Activated naive CD4-positive, alpha-beta T cell treated with anti-CD3 and anti-CD28 coated beads for 36 hours (primary cell): ENCODE measurements at regions of chr17 and their contacts with region 1.

Region 1: DNA sequence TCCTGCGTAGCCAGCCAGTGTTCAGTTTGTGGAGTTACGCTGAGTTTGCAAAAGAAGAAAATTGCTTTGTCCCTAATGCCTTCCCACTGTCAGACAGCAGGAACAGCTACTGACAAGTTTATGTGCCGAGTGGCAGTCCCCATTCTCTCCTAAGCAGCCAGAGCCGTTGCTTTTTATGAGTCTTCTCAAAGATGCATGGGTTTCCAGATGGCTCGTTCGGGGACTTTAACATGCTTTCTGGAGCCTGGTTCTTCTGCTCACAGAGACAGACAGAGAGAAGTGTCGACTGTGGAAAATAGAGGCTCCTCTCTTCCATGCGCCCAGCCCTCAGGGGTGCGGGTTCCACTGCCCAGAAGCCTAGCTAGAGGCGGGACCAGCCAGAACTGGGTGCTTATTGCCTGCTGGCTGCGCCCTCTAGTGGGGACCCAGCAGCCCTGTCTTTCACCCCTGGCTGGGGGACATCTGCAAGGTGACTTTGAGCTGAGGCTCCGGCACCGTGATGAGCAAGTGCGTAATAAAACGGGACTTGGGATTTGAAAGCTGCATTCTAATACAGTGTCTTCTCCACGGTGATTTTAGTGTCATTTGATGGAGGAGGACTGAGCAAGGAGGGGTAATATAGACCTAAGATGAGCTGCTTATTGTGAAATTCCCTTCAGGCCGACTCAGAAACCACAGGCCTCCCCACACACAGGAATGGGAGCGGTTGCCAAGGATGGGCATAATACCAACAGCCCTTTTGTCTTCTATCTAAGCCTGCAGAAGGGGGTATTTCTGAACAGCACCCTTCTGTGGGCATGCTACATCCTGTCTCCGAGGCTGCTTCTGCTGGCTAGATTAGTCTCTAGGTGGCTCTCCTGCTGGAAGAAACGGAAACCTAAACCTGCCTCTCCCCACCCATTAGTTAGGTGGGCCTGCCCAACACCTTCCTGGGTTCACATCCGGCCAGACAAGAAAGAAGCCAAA is 73.1 kb downstream of the CCDC182 start:
- DNase-seq: peak; percentile 83
- H3K4me3 Mint-ChIP-seq: no peak overlapping the region
- H3K27ac Mint-ChIP-seq: peak overlapping the region; percentile 83
- H3K4me1 Mint-ChIP-seq: peaks cover 34% of the 10 kb centered on the region
- H3K27me3 Mint-ChIP-seq: no peaks in the 10 kb centered on the region

Region 2: DNA sequence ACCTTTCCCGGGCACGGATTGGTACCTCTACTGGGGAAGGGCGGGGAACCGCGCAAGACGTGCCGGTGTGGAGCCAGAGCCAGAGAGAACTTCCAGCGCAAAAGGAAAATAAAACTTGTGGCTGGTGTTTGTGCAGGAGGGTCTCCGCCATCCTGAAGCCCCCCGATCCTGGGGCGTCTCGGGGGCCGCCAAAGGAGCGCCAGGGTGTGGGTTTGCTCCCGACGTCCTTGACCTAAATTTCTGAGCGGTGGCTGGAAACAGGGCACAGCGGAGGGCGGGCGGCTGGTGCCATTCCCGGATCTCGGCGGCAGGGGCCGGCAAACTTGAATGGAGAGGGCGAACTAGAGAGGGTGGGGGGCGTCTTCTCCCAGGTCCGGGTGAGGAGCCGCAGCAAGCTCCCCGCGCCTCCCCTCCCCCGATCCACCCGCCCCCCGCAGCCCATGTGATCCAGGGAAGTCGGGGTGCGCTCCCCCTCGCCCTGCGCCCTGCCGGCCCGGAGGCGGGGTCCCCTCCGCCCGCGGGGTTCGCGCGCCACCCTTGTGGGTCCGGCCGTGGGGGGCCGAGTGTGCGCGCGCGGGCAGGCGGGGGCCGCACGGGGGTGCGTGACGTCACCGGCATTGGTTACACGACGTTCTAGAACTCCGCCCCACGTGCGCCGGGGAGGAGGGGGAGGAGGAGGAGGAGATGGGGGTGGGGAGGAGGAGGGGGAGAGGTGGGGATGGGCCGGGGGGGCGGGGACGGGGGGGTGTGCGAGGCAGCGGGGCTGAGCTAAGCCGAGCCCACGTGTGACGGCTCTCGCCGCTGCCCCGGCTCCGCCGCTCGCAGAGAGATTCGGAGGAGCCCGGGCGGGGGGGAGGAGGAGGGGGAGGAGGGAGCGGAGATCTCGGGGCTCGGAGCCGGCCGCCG is 415.9 kb before region 1 on chr17 and contains the start of gene MSI2:
- CTCF ChIA-PET with region 1: interaction called, 6 read pairs
- intact Hi-C with region 1: loop called (anchors 5 kb)
- DNase-seq: peak; percentile 88
- H3K4me3 Mint-ChIP-seq: peak within 1 kb of the TSS; percentile 90
- H3K27ac Mint-ChIP-seq: peak within 1 kb of the TSS; percentile 86
- H3K4me1 Mint-ChIP-seq: peaks cover 38% of the 10 kb centered on the region
- H3K27me3 Mint-ChIP-seq: no peaks in the 10 kb centered on the region
- total RNA-seq, gene MSI2: 38.8 to 39.0 TPM

Region 3: DNA sequence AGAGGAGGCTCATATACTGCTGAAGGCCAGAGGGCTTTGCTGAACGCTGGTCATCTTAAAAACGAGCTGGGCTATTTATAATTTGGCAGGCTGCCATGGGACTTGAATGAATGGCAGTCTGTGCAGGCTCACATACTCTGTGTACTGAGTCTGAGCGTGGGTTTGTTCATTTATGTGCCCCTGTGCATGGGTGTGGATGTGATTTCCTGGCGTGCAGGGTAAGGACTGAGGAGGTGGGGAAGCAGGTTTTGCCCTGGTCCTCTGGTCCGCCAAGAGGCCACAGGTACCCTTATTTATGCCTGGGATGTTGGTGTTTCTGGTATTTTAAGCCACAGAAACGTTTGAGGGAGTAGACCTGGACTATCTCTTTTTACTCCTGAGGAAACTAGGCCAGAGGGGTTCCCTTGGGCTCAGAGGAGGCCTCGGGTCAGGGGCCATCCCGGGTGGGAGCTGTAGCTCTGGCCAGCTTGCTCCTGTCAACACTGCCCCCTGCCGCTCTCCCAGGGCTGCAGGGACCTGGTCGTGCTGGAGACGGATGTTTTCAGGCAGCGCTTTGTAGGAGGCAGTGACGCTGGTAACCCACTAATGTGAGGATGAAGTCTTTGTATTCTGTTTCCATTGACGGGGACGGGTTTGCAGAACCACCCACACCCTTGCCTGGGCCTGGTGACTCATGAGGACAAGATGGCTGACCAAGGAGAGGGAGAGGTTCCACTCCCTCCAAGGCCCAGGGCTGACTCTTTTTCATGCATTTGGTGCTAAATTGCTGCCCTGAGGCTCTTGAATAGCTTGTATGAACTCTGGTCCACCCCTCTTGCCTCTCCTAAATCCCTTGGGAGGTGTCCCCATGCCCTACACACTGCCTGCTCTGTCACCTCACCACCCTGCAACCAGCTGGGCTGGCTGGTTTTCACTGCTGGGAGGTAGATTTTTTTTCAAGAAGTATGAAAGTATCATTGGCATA is 231.1 kb before region 1 on chr17:
- CTCF ChIA-PET with region 1: interaction called, 3 read pairs
- intact Hi-C with region 1: loop called (anchors 2 kb)
- DNase-seq: peak; percentile 93
- H3K4me3 Mint-ChIP-seq: no peak overlapping the region
- H3K27ac Mint-ChIP-seq: peak overlapping the region; percentile 92
- H3K4me1 Mint-ChIP-seq: peaks cover 80% of the 10 kb centered on the region
- H3K27me3 Mint-ChIP-seq: no peaks in the 10 kb centered on the region

Region 4: DNA sequence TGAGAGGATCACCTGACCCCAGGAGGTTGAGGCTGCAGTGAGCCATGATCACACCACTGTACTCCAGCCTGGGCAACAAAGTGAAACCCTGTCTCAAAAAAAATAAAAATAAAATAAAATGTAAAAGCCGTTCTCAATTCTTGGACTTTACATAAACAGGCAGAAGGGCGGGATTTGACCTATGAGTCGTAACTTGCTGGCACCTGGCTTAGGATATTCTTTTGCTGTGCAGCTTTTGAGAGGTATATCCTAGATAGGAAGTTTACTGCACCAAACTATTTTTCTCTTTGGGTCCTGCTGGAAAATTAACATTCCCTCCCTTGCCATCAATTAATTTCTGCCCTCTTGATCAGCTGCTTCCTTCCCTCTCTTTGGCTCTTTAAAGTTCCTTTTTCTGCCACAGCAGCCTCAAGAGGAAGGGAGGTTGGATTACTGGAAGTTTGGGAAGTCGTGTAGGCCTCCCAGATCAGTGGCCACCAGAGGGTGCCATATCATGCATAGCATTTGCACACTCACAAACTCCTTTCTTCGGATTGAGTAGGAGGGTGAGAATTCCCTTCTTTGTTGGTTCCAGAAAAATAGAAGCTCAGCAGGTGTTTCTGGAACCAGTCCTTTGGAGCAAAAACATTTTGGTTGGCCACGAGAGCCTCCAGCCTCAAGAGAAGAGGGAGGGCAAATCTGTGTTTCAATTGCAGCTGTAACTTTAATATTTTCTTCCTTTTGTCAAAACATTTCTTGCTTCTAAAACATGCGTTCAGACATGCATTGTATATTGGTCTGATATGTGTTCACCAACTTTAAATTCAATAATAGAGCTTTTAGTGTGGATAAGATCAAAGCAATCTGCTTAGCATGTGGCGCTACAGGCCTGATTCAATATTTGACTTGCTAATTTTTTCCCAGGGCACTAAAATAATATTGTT is 74.2 kb before region 1 on chr17:
- CTCF ChIA-PET with region 1: interaction called, 58 read pairs
- intact Hi-C with region 1: loop called (anchors 1 kb)
- DNase-seq: peak; percentile 72
- H3K4me3 Mint-ChIP-seq: no peak overlapping the region
- H3K27ac Mint-ChIP-seq: peak overlapping the region; percentile 96
- H3K4me1 Mint-ChIP-seq: peaks cover 51% of the 10 kb centered on the region
- H3K27me3 Mint-ChIP-seq: no peaks in the 10 kb centered on the region

Region 5: GRCh38 chr17:57629886-57630285 is 42.1 kb before region 1 on chr17:
- CTCF ChIA-PET with region 1: no interaction called
- intact Hi-C with region 1: no loop called
- DNase-seq: no peak
- H3K4me3 Mint-ChIP-seq: no peak overlapping the region
- H3K27ac Mint-ChIP-seq: no peak overlapping the region
- H3K4me1 Mint-ChIP-seq: no peaks in the 10 kb centered on the region
- H3K27me3 Mint-ChIP-seq: no peaks in the 10 kb centered on the region

Region 6: GRCh38 chr17:57645950-57646665 is 25.8 kb before region 1 on chr17:
- CTCF ChIA-PET with region 1: interaction called, 11 read pairs
- intact Hi-C with region 1: loop called (anchors 1 kb)
- DNase-seq: peak; percentile 38
- H3K4me3 Mint-ChIP-seq: no peak overlapping the region
- H3K27ac Mint-ChIP-seq: peak overlapping the region; percentile 22
- H3K4me1 Mint-ChIP-seq: peaks cover 7% of the 10 kb centered on the region
- H3K27me3 Mint-ChIP-seq: no peaks in the 10 kb centered on the region

Region 7: GRCh38 chr17:57783106-57783742 is 111.3 kb after region 1 on chr17:
- CTCF ChIA-PET with region 1: interaction called, 6 read pairs
- intact Hi-C with region 1: loop called (anchors 1 kb)
- DNase-seq: peak; percentile 88
- H3K4me3 Mint-ChIP-seq: no peak overlapping the region
- H3K27ac Mint-ChIP-seq: no peak overlapping the region
- H3K4me1 Mint-ChIP-seq: no peaks in the 10 kb centered on the region
- H3K27me3 Mint-ChIP-seq: peaks cover 11% of the 10 kb centered on the region